ENCODE measurements at regions of chr1 and their contacts with region 1.

Region 1: DNA sequence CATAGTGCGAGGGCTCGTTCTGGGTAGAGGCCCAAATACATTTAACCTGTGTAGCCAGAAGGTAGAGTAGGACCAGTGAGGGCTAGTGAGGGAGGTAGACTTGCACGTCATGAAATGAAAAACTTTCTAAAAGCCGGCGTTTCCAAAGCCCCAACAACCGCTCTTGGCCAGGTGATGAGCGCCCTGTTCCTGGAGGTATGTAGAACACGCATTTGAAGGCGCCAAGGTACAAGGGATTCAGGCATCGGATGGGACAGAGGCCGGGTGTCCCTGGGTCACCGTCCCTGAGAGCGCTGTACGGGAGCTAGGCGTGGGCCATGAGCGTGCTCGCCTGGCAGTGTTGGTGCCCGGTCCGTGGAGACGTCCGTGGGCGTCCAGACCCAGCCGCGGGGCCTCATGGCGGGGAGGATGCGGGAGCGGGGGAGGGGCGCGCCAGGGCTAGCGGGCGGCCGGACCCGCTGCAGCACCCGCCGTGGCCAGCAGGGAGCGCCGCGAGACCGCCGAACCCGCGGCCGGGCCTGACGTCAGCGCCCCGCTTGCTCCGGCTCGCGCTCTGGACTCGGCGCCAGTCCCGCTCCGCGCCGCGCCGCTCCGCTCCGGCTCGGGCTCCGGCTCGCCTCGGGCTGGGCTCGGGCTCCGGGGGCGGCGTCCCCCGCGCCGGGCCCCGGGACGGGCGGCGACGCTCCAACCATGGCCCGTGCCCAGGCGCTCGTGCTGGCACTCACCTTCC is at the start of gene PTPRU:
- DNase-seq: peak; percentile 69
- H3K4me3 ChIP-seq: peak within 1 kb of the TSS; percentile 56 to 83 (median 71)
- H3K27ac ChIP-seq: peak within 1 kb of the TSS; percentile 66
- H3K4me1 ChIP-seq: peaks cover 32% of the 10 kb centered on the region
- H3K27me3 ChIP-seq: no peaks in the 10 kb centered on the region
- CTCF ChIP-seq: peak; percentile 27 to 50
- total RNA-seq, gene PTPRU: 38.9 to 46.3 TPM

Region 2: DNA sequence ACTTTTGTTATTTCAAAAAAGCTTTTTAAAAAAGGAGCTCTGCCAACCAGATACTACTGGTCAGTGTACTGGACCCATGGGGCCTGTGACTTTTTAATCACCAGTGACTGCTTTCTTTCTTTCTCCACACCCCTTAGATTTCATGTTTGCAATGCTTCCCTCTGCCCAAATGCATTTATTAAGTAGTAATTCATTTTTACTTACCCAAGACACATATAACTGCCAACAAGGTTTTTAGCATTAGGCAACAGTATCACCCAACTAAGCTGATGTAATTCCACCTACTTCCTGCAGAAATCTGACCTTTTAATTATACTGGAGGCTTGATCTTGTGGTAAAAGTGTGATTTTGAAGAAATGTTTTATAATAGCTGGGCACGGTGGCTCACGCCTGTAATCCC is 17.9 kb before region 1 on chr1:
- CTCF ChIA-PET with region 1: no interaction called
- dilution Hi-C with region 1: no loop called
- in situ Hi-C with region 1: no loop called
- intact Hi-C with region 1: no loop called
- DNase-seq: no peak
- H3K4me3 ChIP-seq: no peak overlapping the region
- H3K27ac ChIP-seq: no peak overlapping the region
- H3K4me1 ChIP-seq: no peaks in the 10 kb centered on the region
- H3K27me3 ChIP-seq: no peaks in the 10 kb centered on the region
- CTCF ChIP-seq: no peak

Region 3: GRCh38 chr1:29259802-29260441 is 23.8 kb after region 1 on chr1:
- CTCF ChIA-PET with region 1: no interaction called
- dilution Hi-C with region 1: no loop called
- in situ Hi-C with region 1: no loop called
- intact Hi-C with region 1: loop called (anchors 2 kb)
- DNase-seq: no peak
- H3K4me3 ChIP-seq: peak overlapping the region in 2 of 3 experiments; percentile 42 to 46
- H3K27ac ChIP-seq: no peak overlapping the region
- H3K4me1 ChIP-seq: peaks cover 14% of the 10 kb centered on the region
- H3K27me3 ChIP-seq: no peaks in the 10 kb centered on the region
- CTCF ChIP-seq: no peak

Region 4: DNA sequence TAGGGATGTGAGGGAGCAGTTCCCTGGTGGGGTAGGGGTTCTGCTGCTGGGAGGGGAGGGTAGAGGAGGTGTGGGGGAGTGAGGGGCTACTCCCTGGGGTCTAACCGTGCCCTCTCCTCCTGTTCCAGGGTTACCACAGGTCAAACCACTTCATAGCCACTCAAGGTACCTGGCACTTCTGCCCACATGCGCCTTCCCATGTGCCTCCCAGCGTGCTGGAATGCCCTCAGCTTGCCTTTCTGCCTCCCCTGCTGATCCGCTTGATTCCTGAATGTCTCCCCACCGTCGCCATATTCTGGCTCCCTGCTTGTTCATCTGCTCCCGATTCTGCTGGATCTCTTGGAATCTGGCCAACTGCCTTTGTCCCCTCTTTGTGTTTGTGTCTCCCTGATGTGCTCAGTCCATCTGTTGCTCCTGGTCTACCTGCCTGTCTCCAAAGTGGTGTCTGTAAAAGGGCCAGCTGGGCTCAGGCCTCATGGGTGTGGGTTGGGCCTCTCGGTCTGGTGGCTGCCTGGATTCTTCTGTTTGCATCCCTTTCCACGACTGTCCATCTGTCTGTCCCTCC is 74.6 kb after region 1 on chr1:
- CTCF ChIA-PET with region 1: no interaction called
- dilution Hi-C with region 1: no loop called
- in situ Hi-C with region 1: no loop called
- intact Hi-C with region 1: no loop called
- DNase-seq: no peak
- H3K4me3 ChIP-seq: no peak overlapping the region
- H3K27ac ChIP-seq: no peak overlapping the region
- H3K4me1 ChIP-seq: no peaks in the 10 kb centered on the region
- H3K27me3 ChIP-seq: no peaks in the 10 kb centered on the region
- CTCF ChIP-seq: no peak

Region 5: GRCh38 chr1:29341936-29342335 is 105.8 kb after region 1 on chr1:
- CTCF ChIA-PET with region 1: no interaction called
- dilution Hi-C with region 1: no loop called
- in situ Hi-C with region 1: no loop called
- intact Hi-C with region 1: loop called (anchors 2 kb)
- DNase-seq: no peak
- H3K4me3 ChIP-seq: no peak overlapping the region
- H3K27ac ChIP-seq: no peak overlapping the region
- H3K4me1 ChIP-seq: no peaks in the 10 kb centered on the region
- H3K27me3 ChIP-seq: no peaks in the 10 kb centered on the region
- CTCF ChIP-seq: peak in 1 of 2 donors; percentile 33

Region 6: GRCh38 chr1:29513357-29513756 is 277.2 kb after region 1 on chr1:
- CTCF ChIA-PET with region 1: no interaction called
- dilution Hi-C with region 1: no loop called
- in situ Hi-C with region 1: no loop called
- intact Hi-C with region 1: loop called (anchors 2 kb)
- DNase-seq: peak; percentile 67
- H3K4me3 ChIP-seq: no peak overlapping the region
- H3K27ac ChIP-seq: no peak overlapping the region
- H3K4me1 ChIP-seq: no peaks in the 10 kb centered on the region
- H3K27me3 ChIP-seq: no peaks in the 10 kb centered on the region
- CTCF ChIP-seq: peak; percentile 94 to 96

Region 7: GRCh38 chr1:29793101-29793546 is 557.0 kb after region 1 on chr1:
- CTCF ChIA-PET with region 1: no interaction called
- dilution Hi-C with region 1: no loop called
- in situ Hi-C with region 1: no loop called
- intact Hi-C with region 1: loop called (anchors 5 kb)
- DNase-seq: peak; percentile 65
- H3K4me3 ChIP-seq: no peak overlapping the region
- H3K27ac ChIP-seq: no peak overlapping the region
- H3K4me1 ChIP-seq: peaks cover 9% of the 10 kb centered on the region
- H3K27me3 ChIP-seq: peaks cover 3% of the 10 kb centered on the region
- CTCF ChIP-seq: peak; percentile 94 to 97

Region 8: GRCh38 chr1:30111431-30111830 is 875.3 kb after region 1 on chr1:
- CTCF ChIA-PET with region 1: no interaction called
- dilution Hi-C with region 1: no loop called
- in situ Hi-C with region 1: no loop called
- intact Hi-C with region 1: loop called (anchors 1 kb)
- DNase-seq: peak; percentile 16
- H3K4me3 ChIP-seq: no peak overlapping the region
- H3K27ac ChIP-seq: no peak overlapping the region
- H3K4me1 ChIP-seq: no peaks in the 10 kb centered on the region
- H3K27me3 ChIP-seq: no peaks in the 10 kb centered on the region
- CTCF ChIP-seq: peak; percentile 43 to 69